ENCODE measurements at regions of chr12 and their contacts with region 1.

Region 1: GRCh38 chr12:3275171-3276041 is 198.2 kb downstream of the TSPAN9 start:
- DNase-seq: peak; percentile 77 to 92 (median 92)
- ATAC-seq: peak; percentile 37 to 55
- H3K4me3 ChIP-seq: no peak overlapping the region
- H3K27ac ChIP-seq: peak overlapping the region; percentile 37
- H3K4me1 ChIP-seq: peaks cover 15% of the 10 kb centered on the region
- H3K27me3 ChIP-seq: no peaks in the 10 kb centered on the region

Region 2: DNA sequence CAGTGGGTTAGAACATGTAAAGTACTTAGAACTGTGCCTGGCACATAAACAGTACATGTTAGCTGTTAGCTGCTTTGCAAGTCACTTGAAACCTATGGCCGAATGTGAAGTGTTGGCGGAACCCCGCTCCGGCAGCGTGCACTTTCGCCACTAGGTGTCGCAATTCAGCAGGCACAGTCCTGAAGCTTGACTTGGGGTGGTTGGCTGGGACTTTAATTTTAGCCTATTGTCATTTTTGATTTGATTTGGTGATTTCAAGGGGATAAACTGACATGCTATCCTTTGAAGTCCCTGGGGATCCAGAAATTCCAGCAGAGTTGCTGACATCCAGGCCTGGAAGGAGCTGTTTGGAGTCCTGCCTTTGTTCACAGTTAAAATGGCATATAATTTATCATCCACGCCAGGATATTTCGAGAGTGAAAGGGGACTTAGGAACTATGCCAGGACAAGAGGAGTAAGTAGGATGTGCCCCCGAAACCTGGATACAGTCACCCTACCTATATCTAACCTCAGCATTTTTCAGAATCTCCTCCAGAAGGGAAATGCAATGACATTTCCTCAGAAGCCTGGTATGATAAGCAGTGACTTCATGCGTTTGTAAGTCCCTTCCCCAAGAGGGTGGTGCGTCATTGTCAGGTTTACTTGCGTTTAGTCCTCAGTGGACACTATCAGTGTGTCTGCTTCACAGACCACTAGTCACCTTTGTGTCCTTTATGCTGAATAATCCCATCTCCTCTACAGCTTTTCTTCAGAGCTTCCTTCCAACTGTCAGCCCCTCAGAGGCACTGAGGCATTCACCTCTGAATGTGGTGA is 201.8 kb before region 1 on chr12:
- intact Hi-C with region 1: loop called in 3 of 4 experiments (anchors 2 to 5 kb)
- DNase-seq: peak; percentile 81 to 93 (median 93)
- ATAC-seq: peak; percentile 43 to 51
- H3K4me3 ChIP-seq: no peak overlapping the region
- H3K27ac ChIP-seq: peak overlapping the region; percentile 50
- H3K4me1 ChIP-seq: peaks cover 6% of the 10 kb centered on the region
- H3K27me3 ChIP-seq: no peaks in the 10 kb centered on the region

Region 3: GRCh38 chr12:3135522-3136461 is 139.6 kb before region 1 on chr12:
- intact Hi-C with region 1: loop called (anchors 2 to 5 kb)
- DNase-seq: no peak
- ATAC-seq: peak; percentile 34 to 48
- H3K4me3 ChIP-seq: no peak overlapping the region
- H3K27ac ChIP-seq: no peak overlapping the region
- H3K4me1 ChIP-seq: peaks cover 17% of the 10 kb centered on the region
- H3K27me3 ChIP-seq: no peaks in the 10 kb centered on the region

Region 4: DNA sequence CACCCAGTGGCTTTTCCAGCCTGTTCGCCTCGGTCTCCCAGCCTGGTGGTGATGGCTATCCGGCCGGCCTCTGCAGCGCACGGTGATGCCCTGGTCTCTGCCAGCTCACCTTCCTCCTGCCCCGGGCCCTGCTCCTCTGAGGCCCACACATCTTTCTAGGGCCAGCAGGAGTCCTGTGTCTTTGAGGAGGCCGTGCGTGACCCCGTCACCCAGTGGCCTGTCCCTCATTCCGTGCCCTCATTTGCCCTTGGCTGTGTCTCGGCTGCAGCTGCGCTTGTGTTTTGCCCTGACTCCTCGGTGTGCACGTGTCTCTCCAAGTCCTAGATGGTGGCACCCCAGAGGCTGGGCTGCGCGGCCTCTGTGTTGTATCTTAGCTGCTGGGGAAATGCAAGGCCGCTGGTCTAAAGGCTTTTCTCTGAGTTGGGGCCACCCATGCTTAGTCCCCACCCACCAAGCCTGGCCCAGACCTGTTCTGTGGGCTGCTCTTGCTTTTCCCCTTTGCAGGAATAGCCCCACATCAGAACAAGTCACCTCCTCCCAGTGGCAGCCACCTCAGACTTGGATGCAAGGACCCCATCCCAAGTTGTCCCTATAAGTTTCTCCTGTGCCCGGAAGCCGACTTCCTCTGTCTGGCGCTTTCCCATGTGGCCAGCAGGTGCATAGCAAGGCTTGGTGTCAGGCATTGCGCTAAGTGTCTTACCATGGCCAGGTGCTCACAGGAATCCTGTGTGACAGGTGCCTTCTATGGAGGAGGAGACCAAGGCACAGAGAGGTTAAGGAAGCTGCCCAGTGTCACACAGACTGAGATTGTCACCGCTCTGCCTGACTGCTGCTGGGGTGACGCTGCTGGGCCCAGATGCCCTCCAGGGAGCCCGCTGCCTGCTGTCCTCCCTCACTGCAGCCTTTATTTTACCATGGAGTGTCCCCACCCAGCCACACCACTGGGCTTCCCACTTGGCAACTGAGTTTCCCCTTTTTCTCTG is 133.8 kb before region 1 on chr12:
- intact Hi-C with region 1: loop called (anchors 2 to 5 kb)
- DNase-seq: no peak
- ATAC-seq: no peak
- H3K4me3 ChIP-seq: no peak overlapping the region
- H3K27ac ChIP-seq: no peak overlapping the region
- H3K4me1 ChIP-seq: peaks cover 5% of the 10 kb centered on the region
- H3K27me3 ChIP-seq: no peaks in the 10 kb centered on the region

Region 5: DNA sequence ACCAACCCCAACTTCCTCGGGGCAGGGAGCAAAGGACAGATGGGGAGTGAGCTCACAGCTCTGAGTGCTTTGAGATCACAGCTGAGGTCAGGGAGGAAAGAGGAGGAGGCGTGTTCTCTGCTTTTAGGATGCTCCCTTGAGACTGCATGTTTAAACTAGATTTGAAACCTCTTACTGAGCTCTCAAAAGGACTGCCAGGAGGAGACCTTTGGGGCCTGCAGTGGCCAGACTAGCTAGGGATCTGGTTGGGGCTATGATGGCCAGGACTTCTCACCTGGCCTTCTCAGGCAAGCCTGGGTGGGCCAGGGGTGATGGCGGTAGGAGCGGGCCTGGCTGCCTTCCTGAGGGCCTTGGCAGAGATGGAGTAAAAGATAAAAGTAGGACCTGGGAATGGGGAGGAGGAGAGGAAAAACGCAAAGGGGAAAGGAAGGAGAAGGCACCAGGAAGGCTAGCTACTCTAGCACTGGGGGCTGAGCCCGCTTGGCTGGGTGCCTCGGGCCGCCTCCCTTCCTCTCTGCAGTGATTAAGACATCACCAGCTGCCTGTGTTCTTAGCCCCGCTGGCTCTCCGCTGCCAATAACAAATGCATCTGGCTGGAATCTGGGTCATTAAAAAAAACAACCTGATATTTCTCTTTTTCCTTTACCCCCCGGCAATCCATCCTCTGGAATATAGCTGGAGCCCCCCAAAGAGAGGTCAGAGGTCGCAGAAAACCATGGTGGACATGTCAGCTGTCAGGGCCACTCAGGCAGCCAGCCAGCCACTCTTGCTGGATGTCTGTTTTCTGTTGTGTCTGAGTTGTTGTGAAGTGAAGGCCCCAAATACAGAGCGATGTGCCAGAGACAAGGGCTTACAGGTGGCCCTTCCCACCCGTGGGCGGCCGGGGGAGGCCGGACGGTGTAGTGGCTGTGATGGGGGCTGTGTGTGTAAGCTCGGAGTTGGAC is 56.9 kb before region 1 on chr12:
- intact Hi-C with region 1: loop called in 1 of 4 experiments (anchors 5 kb)
- DNase-seq: peak; percentile 90 to 96 (median 95)
- ATAC-seq: peak; percentile 79 to 81
- H3K4me3 ChIP-seq: no peak overlapping the region
- H3K27ac ChIP-seq: peak overlapping the region; percentile 92
- H3K4me1 ChIP-seq: peaks cover 30% of the 10 kb centered on the region
- H3K27me3 ChIP-seq: no peaks in the 10 kb centered on the region

Measured in right cardiac atrium (tissue), 5 donors.